HepG2 (cell line): ENCODE measurements at regions of chr10 and their contacts with region 1.

Region 1: DNA sequence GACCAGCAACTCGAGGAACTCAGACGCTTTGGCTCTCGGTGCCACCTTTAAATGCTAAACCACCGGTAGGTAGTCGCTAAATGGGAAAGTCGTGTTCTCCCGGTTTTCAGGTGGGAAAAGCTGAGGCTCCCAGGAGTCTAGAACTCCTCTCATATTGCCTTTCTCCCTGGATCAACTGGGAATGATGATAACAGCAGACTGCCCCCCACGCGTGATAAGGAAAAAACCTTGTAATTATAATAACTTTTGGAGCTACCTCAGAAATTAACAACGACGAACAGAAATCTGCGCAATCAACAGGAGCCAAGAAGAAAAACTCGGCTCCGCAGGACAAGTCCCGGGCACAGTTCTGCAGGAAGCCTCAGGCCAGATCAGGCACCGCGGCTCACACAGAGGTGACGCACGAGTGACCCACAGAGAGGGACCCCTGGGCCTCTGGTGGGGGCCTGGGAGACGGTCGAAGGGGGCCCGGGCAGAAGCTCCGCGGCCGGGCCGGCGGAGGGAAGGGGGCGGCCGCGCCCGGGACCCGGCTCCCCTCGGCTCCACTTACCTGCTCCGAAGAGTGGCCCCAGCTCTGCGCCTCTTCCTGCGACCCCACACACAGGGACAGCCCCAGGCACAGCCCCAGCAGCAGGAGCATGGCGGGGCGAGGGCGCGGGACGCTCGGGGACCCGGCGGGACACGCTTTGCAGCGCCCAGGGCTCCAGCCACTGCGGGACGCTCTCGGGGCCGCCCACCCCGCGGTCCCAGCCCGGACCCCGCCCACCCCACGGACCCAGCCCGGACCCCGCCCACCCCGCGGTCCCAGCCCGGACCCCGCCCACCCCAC is at the start of gene ITIH5:
- DNase-seq: no peak
- ATAC-seq: peak; percentile 73
- H3K4me3 ChIP-seq: peak within 1 kb of the TSS; percentile 78 to 80 (median 78)
- H3K27ac ChIP-seq: no peak within 1 kb of the TSS
- H3K4me1 ChIP-seq: peaks cover 21% of the 10 kb centered on the region
- H3K27me3 ChIP-seq: peaks cover 0 to 23% of the 10 kb centered on the region in 2 experiments; a peak in 2 of 5 replicates
- CTCF ChIP-seq: no peak
- EP300 ChIP-seq: no peak
- POLR2A ChIP-seq: no peak
- RAD21 ChIP-seq: no peak
- total RNA-seq, gene ITIH5: 3.5 and 8.9 TPM in 2 replicates

Region 2: DNA sequence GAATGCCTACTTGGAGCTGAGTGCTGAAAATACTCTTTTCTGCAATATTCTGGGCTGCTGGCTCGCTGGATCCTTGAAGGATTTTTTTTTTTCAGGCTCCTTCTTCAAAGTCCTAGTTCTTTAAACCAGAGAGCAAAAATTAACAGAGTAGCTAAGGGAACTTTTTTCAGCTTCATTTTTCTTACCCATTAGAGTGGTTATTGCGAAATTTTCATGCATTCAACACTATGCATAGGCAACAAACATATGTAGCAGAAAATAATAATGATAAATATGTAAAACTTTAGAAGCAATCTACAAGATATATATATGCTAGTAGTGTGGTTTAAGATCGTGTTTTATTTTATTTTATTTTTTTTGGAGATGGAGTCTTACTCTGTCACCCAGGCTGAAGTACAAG is 520.3 kb before region 1 on chr10:
- CTCF ChIA-PET with region 1: no interaction called
- POLR2A ChIA-PET with region 1: no interaction called
- in situ Hi-C with region 1: no loop called
- intact Hi-C with region 1: no loop called
- DNase-seq: no peak
- ATAC-seq: no peak
- H3K4me3 ChIP-seq: no peak overlapping the region
- H3K27ac ChIP-seq: no peak overlapping the region
- H3K4me1 ChIP-seq: no peaks in the 10 kb centered on the region
- H3K27me3 ChIP-seq: peaks cover 0 to 5% of the 10 kb centered on the region in 2 experiments; a peak in 1 of 5 replicates
- CTCF ChIP-seq: no peak
- EP300 ChIP-seq: no peak
- POLR2A ChIP-seq: no peak
- RAD21 ChIP-seq: no peak

Region 3: DNA sequence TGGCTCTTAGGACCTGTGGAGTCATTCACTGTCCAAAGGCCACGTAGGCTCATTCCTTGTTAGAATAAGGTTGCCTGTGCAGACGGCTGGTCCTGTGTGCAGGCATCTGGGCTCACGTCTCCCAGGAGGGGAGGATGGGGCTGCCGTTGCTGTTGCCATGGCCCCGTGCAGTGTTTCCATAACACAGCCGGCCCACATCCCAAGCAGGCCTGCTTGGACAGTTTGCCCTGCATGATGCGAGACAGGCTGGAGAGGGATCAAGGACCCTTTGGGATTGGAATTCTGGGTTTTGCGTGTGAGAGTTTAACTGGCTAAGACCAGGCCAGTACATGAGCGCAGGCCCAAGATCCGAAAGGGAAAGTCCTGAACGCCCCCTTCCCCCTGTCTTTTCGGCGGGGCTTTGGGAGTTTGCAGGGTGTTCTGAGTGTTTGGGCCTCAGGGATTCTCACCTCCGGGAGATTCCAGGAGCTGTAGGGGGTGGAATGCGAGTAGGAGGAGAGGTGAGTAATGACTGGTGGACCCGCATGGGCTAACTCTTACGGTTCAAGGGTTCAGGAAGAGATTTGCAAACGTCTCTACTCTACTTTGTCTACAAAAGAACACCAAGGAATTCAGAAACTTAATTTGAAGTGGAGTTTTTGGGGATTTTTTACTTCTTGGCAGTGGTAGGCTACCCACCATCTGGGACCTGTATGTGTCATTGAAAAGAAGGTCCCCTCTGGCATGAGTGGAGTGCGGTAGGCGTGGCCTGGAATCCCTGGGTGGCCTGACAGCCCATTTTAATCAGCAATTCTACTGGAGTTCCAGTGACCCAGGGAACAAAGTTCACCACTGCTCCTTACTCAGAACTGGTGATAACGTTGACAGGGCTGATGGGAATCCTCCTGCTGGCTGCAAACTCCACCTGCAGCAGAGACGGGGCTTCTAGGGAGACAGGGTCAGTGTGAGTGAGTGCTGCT is 125.1 kb before region 1 on chr10:
- CTCF ChIA-PET with region 1: no interaction called
- POLR2A ChIA-PET with region 1: no interaction called
- in situ Hi-C with region 1: loop called (anchors 10 kb)
- intact Hi-C with region 1: no loop called
- DNase-seq: peak; percentile 93
- ATAC-seq: peak; percentile 92
- H3K4me3 ChIP-seq: peak overlapping the region; percentile 36 to 66 (median 47)
- H3K27ac ChIP-seq: peak overlapping the region; percentile 86
- H3K4me1 ChIP-seq: peaks cover 56% of the 10 kb centered on the region
- H3K27me3 ChIP-seq: no peaks in the 10 kb centered on the region
- CTCF ChIP-seq: peak; percentile 53
- EP300 ChIP-seq: peak; percentile 61 to 89
- POLR2A ChIP-seq: peak in 1 of 2 experiments; percentile 68; a peak in 2 of 4 replicates
- RAD21 ChIP-seq: peak; percentile 58; the same call in 1 of the 2 replicates